Activated CD4-positive, alpha-beta memory T cell treated with anti-CD3 and anti-CD28 coated beads for 36 hours (primary cell): ENCODE measurements at regions of chr7 and their contacts with region 1.

Region 1: GRCh38 chr7:87369216-87369615 is 23.8 kb downstream of the CROT start:
- DNase-seq: peak; percentile 37
- H3K4me3 Mint-ChIP-seq: no peak overlapping the region
- H3K27ac Mint-ChIP-seq: no peak overlapping the region
- H3K4me1 Mint-ChIP-seq: peaks cover 5% of the 10 kb centered on the region
- H3K27me3 Mint-ChIP-seq: no peaks in the 10 kb centered on the region

Region 2: GRCh38 chr7:87354749-87355148 is 14.5 kb before region 1 on chr7:
- CTCF ChIA-PET with region 1: no interaction called
- POLR2A ChIA-PET with region 1: no interaction called
- intact Hi-C with region 1: loop called (anchors 1 kb)
- DNase-seq: no peak
- H3K4me3 Mint-ChIP-seq: no peak overlapping the region
- H3K27ac Mint-ChIP-seq: no peak overlapping the region
- H3K4me1 Mint-ChIP-seq: peaks cover 2% of the 10 kb centered on the region
- H3K27me3 Mint-ChIP-seq: no peaks in the 10 kb centered on the region